HEK293 (cell line): ENCODE measurements at regions of chr6 and their contacts with region 1.

Region 1: GRCh38 chr6:131914967-131915751 is 36.0 kb downstream of the CCN2 start:
- H3K4me3 ChIP-seq: no peak overlapping the region
- H3K27ac ChIP-seq: no peak overlapping the region
- H3K4me1 ChIP-seq: no peaks in the 10 kb centered on the region
- CTCF ChIP-seq: peak; percentile 72

Region 2: GRCh38 chr6:131663577-131664165 is 251.5 kb before region 1 on chr6:
- CTCF ChIA-PET with region 1: no interaction called
- POLR2A ChIA-PET with region 1: no interaction called
- H3K4me3 ChIP-seq: no peak overlapping the region
- H3K27ac ChIP-seq: no peak overlapping the region
- H3K4me1 ChIP-seq: no peaks in the 10 kb centered on the region
- CTCF ChIP-seq: no peak

Region 3: GRCh38 chr6:131929264-131929663 is 14.1 kb after region 1 on chr6:
- CTCF ChIA-PET with region 1: interaction called, 86 read pairs
- POLR2A ChIA-PET with region 1: no interaction called
- H3K4me3 ChIP-seq: no peak overlapping the region
- H3K27ac ChIP-seq: no peak overlapping the region
- H3K4me1 ChIP-seq: no peaks in the 10 kb centered on the region
- CTCF ChIP-seq: no peak

Region 4: DNA sequence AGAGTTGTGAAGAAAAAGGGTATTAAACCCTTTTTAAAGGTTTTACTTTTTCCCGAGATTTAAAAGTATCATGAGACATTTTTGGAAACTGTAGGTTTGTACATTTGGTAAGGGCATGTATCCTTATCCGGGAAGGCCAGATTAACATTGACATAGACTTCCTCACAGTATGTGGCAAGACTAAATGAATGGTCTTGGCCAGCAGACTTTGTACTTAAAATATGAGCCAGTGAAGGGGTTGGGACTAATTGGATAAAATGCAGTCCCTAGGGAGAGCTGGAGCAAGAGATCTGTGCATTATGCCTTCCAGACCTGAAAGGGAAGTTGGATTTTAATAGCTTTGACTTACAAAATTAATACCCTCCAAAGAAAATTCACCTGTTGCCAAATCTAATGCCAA is 96.4 kb after region 1 on chr6:
- CTCF ChIA-PET with region 1: no interaction called
- POLR2A ChIA-PET with region 1: no interaction called
- H3K4me3 ChIP-seq: no peak overlapping the region
- H3K27ac ChIP-seq: no peak overlapping the region
- H3K4me1 ChIP-seq: no peaks in the 10 kb centered on the region
- CTCF ChIP-seq: no peak

Region 5: GRCh38 chr6:132218059-132218696 is 303.0 kb after region 1 on chr6:
- CTCF ChIA-PET with region 1: interaction called, 10 read pairs
- POLR2A ChIA-PET with region 1: no interaction called
- H3K4me3 ChIP-seq: no peak overlapping the region
- H3K27ac ChIP-seq: no peak overlapping the region
- H3K4me1 ChIP-seq: no peaks in the 10 kb centered on the region
- CTCF ChIP-seq: no peak

Region 6: GRCh38 chr6:132247381-132248159 is 332.4 kb after region 1 on chr6:
- CTCF ChIA-PET with region 1: interaction called, 13 read pairs
- POLR2A ChIA-PET with region 1: no interaction called
- H3K4me3 ChIP-seq: no peak overlapping the region
- H3K27ac ChIP-seq: no peak overlapping the region
- H3K4me1 ChIP-seq: no peaks in the 10 kb centered on the region
- CTCF ChIP-seq: no peak

Region 7: DNA sequence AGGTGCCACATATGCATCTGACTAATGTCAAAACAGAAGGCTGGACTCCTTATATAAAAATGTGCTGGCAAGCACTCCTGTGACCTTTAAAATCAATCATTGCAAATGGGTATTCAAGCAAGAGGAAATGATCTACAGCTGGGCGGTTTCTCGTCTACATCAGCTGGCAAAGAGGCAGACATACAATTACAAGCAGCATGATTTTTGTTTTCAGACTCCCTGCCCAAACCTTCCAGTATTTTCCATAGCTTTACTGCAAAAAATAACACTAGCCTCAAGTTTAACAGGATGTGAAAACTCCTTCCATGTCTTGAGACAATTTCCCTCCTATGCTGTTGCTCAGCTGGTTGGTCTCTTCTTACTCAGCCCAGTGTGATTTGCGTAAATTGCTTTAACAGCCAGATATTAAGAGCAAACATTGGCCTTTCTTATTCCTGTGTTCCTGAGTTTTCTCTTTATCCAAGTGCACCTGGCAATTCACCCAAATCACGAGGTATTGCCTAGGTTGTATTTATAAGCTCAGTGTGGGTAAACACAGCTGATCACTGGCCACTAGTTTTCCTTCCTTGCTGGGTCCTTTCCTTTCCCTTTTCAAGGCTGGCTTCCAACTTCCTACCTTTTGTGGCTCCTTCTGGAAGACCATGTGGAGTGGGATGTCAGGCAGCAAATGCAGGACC is 355.7 kb after region 1 on chr6:
- CTCF ChIA-PET with region 1: interaction called, 13 read pairs
- POLR2A ChIA-PET with region 1: no interaction called
- H3K4me3 ChIP-seq: no peak overlapping the region
- H3K27ac ChIP-seq: no peak overlapping the region
- H3K4me1 ChIP-seq: no peaks in the 10 kb centered on the region
- CTCF ChIP-seq: no peak

Region 8: DNA sequence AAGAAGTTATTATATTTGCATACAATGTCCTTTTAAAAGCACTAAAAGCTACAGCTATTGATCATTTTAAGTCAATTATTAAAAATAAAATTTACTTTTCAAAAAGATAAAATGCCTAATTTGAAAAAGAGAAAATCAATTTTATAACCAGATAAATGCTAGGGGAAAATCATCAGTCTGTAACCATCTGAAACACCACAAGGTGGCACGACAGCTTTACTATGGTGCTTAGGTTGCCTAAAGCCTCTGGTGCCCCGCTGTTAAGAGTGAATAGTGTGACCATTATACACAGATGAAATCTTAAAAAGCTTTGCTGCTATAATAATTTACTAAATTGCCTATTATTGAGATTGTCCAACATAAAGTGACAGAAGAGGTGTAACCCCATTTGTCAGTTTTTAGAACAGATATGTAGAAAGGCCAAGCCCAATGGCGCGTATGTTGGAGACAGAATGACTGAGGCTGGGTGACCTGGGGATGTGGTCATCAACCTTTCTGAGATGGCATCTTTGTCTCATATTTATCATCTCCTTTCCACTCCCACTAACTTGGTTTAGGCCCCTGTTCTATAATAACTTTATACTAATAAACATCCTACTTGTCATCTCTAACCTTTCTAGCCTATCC is 385.3 kb after region 1 on chr6:
- CTCF ChIA-PET with region 1: interaction called, 29 read pairs
- POLR2A ChIA-PET with region 1: no interaction called
- H3K4me3 ChIP-seq: no peak overlapping the region
- H3K27ac ChIP-seq: no peak overlapping the region
- H3K4me1 ChIP-seq: no peaks in the 10 kb centered on the region
- CTCF ChIP-seq: no peak